Activated CD4-positive, alpha-beta T cell treated with anti-CD3 and anti-CD28 coated beads, Interleukin-2, amount 10 ng/mL, durations not matched to agents 24 days and 14 days (primary cell): ENCODE measurements at regions of chr14 and their contacts with region 1.

Region 1: DNA sequence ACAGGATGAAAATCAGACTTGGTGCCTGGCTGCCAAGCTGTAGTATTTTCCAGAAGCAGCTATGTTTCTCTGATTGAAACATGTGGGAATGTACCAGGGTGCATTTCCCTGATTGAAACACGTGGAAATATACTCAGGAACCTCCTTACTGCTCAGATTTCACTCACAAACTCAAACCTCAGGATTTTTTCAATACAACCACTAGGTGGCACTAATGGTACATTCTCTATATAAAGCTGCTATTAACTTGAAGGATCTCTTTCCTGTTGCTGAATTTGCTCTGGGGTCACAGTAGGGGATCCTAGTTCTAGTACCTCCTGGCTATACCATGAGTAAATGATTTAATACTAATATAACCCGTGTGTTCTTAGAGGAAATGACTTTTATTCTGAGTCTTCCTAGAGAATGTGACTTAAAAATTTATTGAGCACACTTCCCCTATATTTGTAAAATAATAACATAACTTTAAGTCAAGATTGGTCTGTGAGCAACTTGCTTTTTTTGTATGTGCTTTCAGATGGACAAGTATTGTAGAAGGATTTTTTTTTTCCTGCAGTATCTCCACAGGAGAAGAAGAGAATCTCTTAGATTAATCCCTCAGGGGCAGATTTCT is 173.8 kb upstream of the MIS18BP1 start:
- DNase-seq: no peak
- H3K4me3 Mint-ChIP-seq: no peak overlapping the region
- H3K27ac Mint-ChIP-seq: no peak overlapping the region
- H3K4me1 Mint-ChIP-seq: no peaks in the 10 kb centered on the region
- H3K27me3 Mint-ChIP-seq: no peaks in the 10 kb centered on the region

Region 2: GRCh38 chr14:44945264-44945663 is 481.5 kb before region 1 on chr14:
- intact Hi-C with region 1: no loop called
- DNase-seq: no peak
- H3K4me3 Mint-ChIP-seq: no peak overlapping the region
- H3K27ac Mint-ChIP-seq: no peak overlapping the region
- H3K4me1 Mint-ChIP-seq: peaks cover 11% of the 10 kb centered on the region
- H3K27me3 Mint-ChIP-seq: no peaks in the 10 kb centered on the region

Region 3: DNA sequence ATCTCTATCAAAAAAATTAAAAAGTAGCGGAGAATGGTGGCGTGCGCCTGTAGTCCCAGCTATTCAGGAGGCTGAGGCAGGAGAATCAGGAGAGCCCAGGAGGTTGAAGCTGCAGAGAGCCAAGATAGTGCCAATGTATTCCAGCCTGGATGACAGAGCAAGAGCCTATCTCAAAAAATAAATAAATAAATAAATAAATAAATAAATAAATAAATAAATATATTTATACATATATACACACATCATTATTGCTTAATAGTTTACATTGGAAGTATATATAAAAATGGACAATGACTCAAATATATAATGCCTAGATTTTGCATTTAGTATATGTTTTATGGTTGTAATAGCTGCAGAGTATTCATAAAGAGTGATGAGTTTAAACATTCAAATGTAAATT is 411.6 kb before region 1 on chr14:
- intact Hi-C with region 1: no loop called
- DNase-seq: no peak
- H3K4me3 Mint-ChIP-seq: no peak overlapping the region
- H3K27ac Mint-ChIP-seq: no peak overlapping the region
- H3K4me1 Mint-ChIP-seq: no peaks in the 10 kb centered on the region
- H3K27me3 Mint-ChIP-seq: no peaks in the 10 kb centered on the region

Region 4: GRCh38 chr14:45406942-45407341 is 19.8 kb before region 1 on chr14:
- intact Hi-C with region 1: no loop called
- DNase-seq: no peak
- H3K4me3 Mint-ChIP-seq: no peak overlapping the region
- H3K27ac Mint-ChIP-seq: no peak overlapping the region
- H3K4me1 Mint-ChIP-seq: no peaks in the 10 kb centered on the region
- H3K27me3 Mint-ChIP-seq: no peaks in the 10 kb centered on the region

Region 5: DNA sequence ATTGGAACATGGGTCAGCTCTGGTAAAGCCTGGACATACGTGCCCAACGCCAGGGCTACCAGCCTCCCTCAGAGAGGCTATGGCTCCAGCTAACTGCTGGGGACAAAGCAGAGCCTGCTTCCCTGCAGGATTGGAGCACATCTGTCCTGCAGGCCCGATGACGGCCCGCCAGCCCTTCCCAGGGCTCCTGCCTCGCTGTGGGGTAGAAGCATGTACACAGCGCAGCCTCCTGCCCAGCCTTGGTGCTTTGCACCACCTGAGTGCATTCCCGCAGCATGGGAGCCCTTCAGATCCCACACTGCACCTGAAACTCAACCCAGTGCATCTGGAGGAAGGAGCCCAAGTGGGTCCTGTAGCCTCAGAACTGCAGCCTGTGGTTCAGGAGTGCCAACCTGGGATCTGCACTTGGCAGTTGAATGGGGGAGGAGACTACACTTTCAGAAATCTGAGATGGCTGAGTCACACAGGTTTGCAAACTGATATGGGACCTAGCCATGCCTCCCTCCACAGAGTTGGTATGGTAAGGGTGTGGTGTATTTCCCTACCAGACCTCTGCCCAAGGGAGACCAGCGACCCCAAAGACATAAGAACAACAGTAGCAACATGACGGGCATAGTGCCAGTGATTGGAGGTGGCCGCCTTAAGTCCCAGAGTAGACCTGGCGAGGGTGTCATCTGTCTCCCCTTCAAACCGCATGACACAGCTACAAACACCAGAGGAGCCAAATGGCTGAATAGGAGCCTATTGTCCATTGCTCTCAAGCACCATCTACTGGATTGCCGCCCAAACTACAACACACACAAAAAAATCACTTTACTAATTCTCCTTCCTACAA is 100.2 kb after region 1 on chr14:
- intact Hi-C with region 1: loop called (anchors 5 kb)
- DNase-seq: no peak
- H3K4me3 Mint-ChIP-seq: no peak overlapping the region
- H3K27ac Mint-ChIP-seq: no peak overlapping the region
- H3K4me1 Mint-ChIP-seq: no peaks in the 10 kb centered on the region
- H3K27me3 Mint-ChIP-seq: no peaks in the 10 kb centered on the region

Region 6: GRCh38 chr14:45679852-45680251 is 253.1 kb after region 1 on chr14:
- intact Hi-C with region 1: no loop called
- DNase-seq: no peak
- H3K4me3 Mint-ChIP-seq: no peak overlapping the region
- H3K27ac Mint-ChIP-seq: no peak overlapping the region
- H3K4me1 Mint-ChIP-seq: no peaks in the 10 kb centered on the region
- H3K27me3 Mint-ChIP-seq: no peaks in the 10 kb centered on the region

Region 7: DNA sequence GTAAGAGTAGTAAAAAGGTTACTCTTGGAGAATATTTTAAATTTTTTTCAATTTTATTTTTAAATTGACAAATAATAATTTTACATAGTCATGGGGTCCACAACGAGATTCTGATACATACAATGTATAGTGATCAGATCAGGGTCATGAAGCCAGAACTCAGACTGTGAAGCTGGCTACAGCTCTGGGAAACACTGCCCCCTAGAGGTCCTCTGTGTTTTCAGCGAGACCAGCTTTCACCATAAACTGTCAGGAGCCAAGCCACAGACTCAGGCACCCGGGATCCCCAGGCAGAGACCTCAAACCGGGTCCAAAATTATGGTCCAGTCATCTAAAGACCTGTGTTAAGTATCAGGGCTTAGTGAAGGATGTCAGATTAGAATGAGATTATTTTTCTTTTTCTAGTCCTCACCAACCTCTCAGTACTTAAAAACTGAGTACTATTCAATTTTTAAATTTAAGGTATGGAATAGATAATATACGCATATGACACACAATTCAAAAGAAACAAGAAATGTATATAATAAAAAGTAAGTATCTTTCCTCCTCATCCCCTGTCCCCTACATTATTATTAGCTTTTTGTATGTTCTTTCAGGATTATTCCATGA is 1851.6 kb after region 1 on chr14:
- intact Hi-C with region 1: loop called (anchors 5 kb)
- DNase-seq: peak; percentile 77
- H3K4me3 Mint-ChIP-seq: no peak overlapping the region
- H3K27ac Mint-ChIP-seq: no peak overlapping the region
- H3K4me1 Mint-ChIP-seq: no peaks in the 10 kb centered on the region
- H3K27me3 Mint-ChIP-seq: no peaks in the 10 kb centered on the region